Left colon (tissue), 2 donors: ENCODE measurements at regions of chr2 and their contacts with region 1.

Region 1: DNA sequence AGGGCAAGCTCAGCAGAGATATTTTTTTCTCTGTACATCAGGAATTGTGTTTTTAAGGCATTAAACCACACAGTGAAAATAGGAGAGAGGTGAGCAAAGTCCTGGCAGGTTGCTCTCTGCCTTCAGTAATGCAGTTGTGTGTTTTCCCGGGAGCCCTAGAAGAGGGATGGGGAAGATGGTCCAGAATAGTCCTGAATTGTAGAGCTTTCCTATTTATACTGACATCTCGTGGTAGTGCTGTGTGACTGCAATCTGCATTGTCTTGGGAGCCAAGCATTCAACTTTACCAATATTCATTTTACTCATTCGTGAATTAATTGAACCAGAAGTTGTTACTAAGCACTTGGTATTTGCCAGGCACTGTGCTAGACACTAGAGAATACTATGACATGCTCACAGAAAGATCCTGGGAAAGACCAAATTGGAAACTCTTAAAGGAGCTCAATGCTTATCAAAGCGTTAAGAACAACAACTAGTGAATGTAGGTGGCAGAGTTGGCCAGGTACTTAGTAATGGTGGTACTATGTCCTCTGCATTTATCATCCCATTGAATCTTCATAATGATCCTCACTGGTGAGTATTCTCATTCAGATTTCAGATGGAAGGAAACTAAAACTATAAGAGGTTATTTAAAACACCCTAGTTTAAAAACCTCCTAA is 214.6 kb downstream of the TRIB2 start:
- DNase-seq: no peak
- ATAC-seq: peak; percentile 36

Region 2: GRCh38 chr2:11863513-11864328 is 1067.6 kb before region 1 on chr2:
- intact Hi-C with region 1: loop called in 1 of 2 experiments (anchors 5 kb)
- DNase-seq: peak; percentile 64 to 71
- ATAC-seq: peak; percentile 72

Region 3: GRCh38 chr2:13666582-13667414 is 735.5 kb after region 1 on chr2:
- intact Hi-C with region 1: no loop called
- DNase-seq: no peak
- ATAC-seq: no peak